Dorsolateral prefrontal cortex (tissue), 120 donors: ENCODE measurements at regions of chr11 and their contacts with region 1.

Region 1: DNA sequence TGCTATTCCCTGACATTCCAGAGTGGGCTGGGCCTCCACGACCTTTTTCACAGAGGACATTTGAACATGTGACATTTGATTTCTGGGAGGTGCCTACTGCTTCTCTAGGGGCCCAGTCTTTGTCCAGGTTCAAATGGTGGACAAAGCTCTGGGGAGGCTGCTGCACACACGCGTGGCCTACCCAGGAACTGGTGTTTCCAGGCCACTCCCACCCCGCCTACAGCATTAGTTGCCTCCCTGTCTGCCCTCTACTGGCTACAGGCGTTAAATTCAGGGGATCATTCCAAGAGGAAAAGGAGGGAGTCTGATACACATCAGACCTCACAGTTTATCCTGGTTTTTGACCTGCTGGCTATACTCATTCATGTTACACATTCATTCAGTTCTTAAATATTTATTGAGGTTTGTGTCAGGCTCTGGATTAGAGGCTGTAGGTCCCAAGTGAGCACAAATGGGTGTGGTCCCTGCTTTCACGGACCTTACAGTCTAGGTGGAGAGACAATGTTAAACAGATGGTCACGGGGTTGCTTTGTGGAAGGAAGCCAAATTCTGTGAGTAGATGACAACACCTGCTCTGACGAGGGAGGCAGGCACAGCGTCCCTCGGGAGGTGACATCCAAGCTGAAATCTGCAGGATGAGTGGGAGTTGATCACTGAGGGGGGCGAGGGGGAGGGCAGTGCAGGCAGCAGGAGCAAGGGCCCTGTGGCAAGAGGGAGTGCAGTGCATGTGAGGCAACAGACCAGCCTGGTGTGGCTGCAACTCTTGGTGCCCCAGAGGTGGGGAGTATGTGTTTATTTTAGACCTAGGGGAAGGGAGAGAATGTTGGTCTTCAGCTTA is 11.8 kb downstream of the TUB start:
- DNase-seq: peak in 5 of 10 donors; percentile 45 to 69 (median 54)
- H3K4me3 ChIP-seq: no peak overlapping the region
- H3K27ac ChIP-seq: peak overlapping the region in 11 of 59 donors; percentile 6 to 56 (median 12)
- H3K27me3 ChIP-seq: no peaks in the 10 kb centered on the region
- CTCF ChIP-seq: peak in 54 of 56 donors; percentile 36 to 73 (median 61)

Region 2: GRCh38 chr11:7964261-7964660 is 128.5 kb before region 1 on chr11:
- intact Hi-C with region 1: no loop called
- DNase-seq: no peak
- H3K4me3 ChIP-seq: no peak overlapping the region
- H3K27ac ChIP-seq: no peak overlapping the region
- H3K27me3 ChIP-seq: peaks cover 0 to 12% (median 0%) of the 10 kb centered on the region in 45 donors
- CTCF ChIP-seq: no peak

Region 3: DNA sequence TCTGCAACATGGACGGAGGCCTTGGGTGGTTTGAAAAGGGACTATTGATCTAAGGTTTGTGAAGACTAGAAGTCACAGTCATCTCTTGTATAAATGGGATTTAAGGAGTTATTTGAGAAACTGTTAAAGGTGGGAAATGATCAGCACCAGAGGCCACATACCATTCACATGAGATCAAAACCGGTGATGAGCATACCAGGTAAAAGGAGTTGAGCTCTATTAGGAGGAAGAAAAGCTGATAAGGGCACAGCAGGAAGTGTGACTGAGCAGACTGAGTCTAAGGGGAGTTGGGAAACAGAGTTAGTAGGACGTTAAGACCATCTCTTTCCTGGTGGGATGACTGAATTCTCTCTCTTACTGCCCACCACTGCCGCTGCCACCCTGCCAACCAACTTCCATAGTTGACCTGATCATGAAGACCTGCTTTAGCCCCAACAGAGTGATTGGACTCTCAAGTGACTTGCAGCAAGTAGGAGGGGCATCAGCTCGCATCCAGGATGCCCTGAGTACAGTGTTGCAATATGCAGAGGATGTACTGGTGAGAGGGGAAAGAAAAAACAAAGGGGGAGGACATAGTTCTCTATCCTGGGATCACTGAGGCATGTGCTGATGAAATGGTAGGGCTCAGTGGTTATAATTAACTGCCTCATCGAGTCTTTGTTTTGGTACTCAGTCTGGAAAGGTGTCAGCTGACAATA is 98.1 kb before region 1 on chr11:
- intact Hi-C with region 1: no loop called
- DNase-seq: no peak
- H3K4me3 ChIP-seq: no peak overlapping the region
- H3K27ac ChIP-seq: no peak overlapping the region
- H3K27me3 ChIP-seq: no peaks in the 10 kb centered on the region
- CTCF ChIP-seq: no peak

Region 4: GRCh38 chr11:8006349-8006977 is 86.3 kb before region 1 on chr11:
- intact Hi-C with region 1: loop called (anchors 2 to 5 kb)
- DNase-seq: peak in 8 of 10 donors; percentile 30 to 73 (median 54)
- H3K4me3 ChIP-seq: no peak overlapping the region
- H3K27ac ChIP-seq: no peak overlapping the region
- H3K27me3 ChIP-seq: no peaks in the 10 kb centered on the region
- CTCF ChIP-seq: peak; percentile 30 to 94 (median 79)

Region 5: GRCh38 chr11:8011981-8012444 is 80.8 kb before region 1 on chr11:
- intact Hi-C with region 1: loop called (anchors 2 to 5 kb)
- DNase-seq: no peak
- H3K4me3 ChIP-seq: no peak overlapping the region
- H3K27ac ChIP-seq: no peak overlapping the region
- H3K27me3 ChIP-seq: no peaks in the 10 kb centered on the region
- CTCF ChIP-seq: no peak